ENCODE measurements at regions of chr5 and their contacts with region 1.

Region 1: DNA sequence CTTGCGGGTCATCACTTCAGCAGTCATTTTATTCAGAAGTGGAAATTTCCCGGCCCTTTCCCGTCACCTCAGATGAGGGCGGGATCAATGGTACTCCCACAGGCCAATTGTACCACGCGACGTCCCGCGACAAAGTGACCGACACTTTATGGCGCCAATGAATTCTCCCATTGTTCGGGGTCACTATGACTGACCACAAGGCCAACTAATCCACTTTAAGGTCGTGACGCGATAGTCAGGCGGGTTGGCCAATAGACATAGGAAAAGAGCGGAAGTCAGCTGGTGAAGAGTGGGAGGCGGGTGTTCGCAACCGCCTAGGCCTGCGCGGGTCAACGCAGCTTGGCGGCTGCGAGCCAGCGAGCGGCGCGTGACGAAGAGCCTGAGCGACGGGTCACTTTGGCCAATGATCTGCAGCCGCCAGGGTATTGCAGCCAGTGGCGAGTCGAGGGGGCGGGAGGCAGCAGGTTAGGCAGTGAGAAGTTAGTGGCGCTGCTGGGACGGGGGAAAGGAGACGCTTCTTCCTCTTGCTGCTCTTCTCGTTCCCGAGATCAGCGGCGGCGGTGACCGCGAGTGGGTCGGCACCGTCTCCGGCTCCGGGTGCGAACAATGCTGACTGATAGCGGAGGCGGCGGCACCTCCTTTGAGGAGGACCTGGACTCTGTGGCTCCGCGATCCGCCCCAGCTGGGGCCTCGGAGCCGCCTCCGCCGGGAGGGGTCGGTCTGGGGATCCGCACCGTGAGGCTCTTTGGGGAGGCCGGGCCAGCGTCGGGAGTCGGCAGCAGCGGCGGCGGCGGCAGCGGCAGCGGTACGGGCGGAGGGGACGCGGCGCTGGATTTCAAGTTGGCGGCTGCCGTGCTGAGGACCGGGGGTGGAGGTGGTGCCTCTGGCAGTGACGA is at the start of gene ANKHD1:
- DNase-seq: peak; percentile 91 to 100 (median 95)
- ATAC-seq: peak; percentile 77
- H3K4me3 ChIP-seq: peak within 1 kb of the TSS; percentile 86 to 92
- H3K4me3 Mint-ChIP-seq: no peak within 1 kb of the TSS
- H3K27ac ChIP-seq: peak within 1 kb of the TSS; percentile 89 to 90
- H3K27ac Mint-ChIP-seq: peak within 1 kb of the TSS; percentile 91
- H3K4me1 ChIP-seq: peaks cover 37% of the 10 kb centered on the region
- H3K4me1 Mint-ChIP-seq: peaks cover 36% of the 10 kb centered on the region
- H3K27me3 ChIP-seq: no peaks in the 10 kb centered on the region
- H3K27me3 Mint-ChIP-seq: no peaks in the 10 kb centered on the region
- CTCF ChIP-seq: no peak
- total RNA-seq, gene ANKHD1: 209 to 212 TPM

Region 2: GRCh38 chr5:139222335-139222734 is 1179.3 kb before region 1 on chr5:
- CTCF ChIA-PET with region 1: no interaction called
- POLR2A ChIA-PET with region 1: no interaction called
- intact Hi-C with region 1: no loop called
- DNase-seq: no peak
- ATAC-seq: no peak
- H3K4me3 ChIP-seq: no peak overlapping the region
- H3K4me3 Mint-ChIP-seq: no peak overlapping the region
- H3K27ac ChIP-seq: no peak overlapping the region
- H3K27ac Mint-ChIP-seq: no peak overlapping the region
- H3K4me1 ChIP-seq: no peaks in the 10 kb centered on the region
- H3K4me1 Mint-ChIP-seq: no peaks in the 10 kb centered on the region
- H3K27me3 ChIP-seq: no peaks in the 10 kb centered on the region
- H3K27me3 Mint-ChIP-seq: peaks cover 8% of the 10 kb centered on the region
- CTCF ChIP-seq: no peak

Region 3: GRCh38 chr5:140357726-140358093 is 43.9 kb before region 1 on chr5:
- CTCF ChIA-PET with region 1: no interaction called
- POLR2A ChIA-PET with region 1: no interaction called
- intact Hi-C with region 1: no loop called
- DNase-seq: peak; percentile 55 to 83 (median 67)
- ATAC-seq: peak; percentile 99
- H3K4me3 ChIP-seq: peak overlapping the region in 1 of 2 experiments; percentile 20
- H3K4me3 Mint-ChIP-seq: peak overlapping the region; percentile 64
- H3K27ac ChIP-seq: no peak overlapping the region
- H3K27ac Mint-ChIP-seq: no peak overlapping the region
- H3K4me1 ChIP-seq: peaks cover 9% of the 10 kb centered on the region
- H3K4me1 Mint-ChIP-seq: peaks cover 7% of the 10 kb centered on the region
- H3K27me3 ChIP-seq: no peaks in the 10 kb centered on the region
- H3K27me3 Mint-ChIP-seq: peaks cover 11% of the 10 kb centered on the region
- CTCF ChIP-seq: peak; percentile 77

Region 4: DNA sequence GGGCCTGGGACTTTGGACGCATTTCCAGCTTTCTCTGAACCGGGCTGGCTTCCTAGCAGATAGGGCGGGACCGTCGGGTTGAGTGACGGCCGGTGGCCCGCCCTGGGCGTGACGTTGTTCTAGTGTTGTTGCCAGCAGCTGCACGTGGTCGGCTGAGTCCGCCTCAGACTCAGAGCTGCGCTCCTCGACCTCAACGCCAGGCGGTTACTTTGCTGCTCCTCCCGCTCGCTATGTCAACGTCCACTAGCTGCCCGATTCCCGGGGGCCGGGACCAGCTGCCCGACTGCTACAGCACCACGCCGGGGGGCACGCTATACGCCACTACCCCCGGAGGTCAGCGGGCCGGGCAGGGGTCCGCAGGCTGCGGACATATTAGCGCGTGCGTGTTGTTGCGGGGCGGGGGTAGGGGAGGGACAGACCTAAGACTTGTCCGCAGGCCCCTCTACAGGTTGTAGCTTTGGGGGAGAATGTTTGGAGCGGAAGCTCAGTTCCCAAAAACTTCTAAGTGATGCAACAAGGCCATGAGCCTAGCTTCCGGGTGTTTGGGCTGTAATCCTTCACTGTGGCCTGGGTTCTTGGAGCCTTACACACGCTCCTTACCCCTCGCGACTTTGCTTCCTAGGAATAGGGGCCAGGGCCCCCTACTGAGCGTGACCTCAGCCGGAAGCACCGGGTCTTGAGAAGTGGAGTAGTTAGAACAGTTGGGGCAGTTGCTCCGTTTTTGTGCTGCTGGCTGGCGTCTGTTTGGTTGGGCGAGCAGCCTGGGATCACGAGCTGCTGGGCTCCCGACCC is 146.1 kb after region 1 on chr5 and contains the start of gene EIF4EBP3:
- CTCF ChIA-PET with region 1: no interaction called
- POLR2A ChIA-PET with region 1: interaction called, 23 read pairs
- intact Hi-C with region 1: loop called in 1 of 2 experiments (anchors 2 kb)
- DNase-seq: peak; percentile 74 to 94 (median 88)
- ATAC-seq: peak; percentile 97
- H3K4me3 ChIP-seq: peak within 1 kb of the TSS; percentile 69 to 96
- H3K4me3 Mint-ChIP-seq: peak within 1 kb of the TSS; percentile 90
- H3K27ac ChIP-seq: peak within 1 kb of the TSS; percentile 88 to 96
- H3K27ac Mint-ChIP-seq: peak within 1 kb of the TSS; percentile 98
- H3K4me1 ChIP-seq: peaks cover 21% of the 10 kb centered on the region
- H3K4me1 Mint-ChIP-seq: peaks cover 31% of the 10 kb centered on the region
- H3K27me3 ChIP-seq: no peaks in the 10 kb centered on the region
- H3K27me3 Mint-ChIP-seq: no peaks in the 10 kb centered on the region
- CTCF ChIP-seq: peak; percentile 72
- total RNA-seq, gene EIF4EBP3: 10.6 to 13.7 TPM

Region 5: GRCh38 chr5:140564196-140565023 is 162.8 kb after region 1 on chr5 and contains the starts of genes APBB3 and SLC35A4:
- CTCF ChIA-PET with region 1: no interaction called
- POLR2A ChIA-PET with region 1: interaction called, 7 read pairs
- intact Hi-C with region 1: loop called in 1 of 2 experiments (anchors 1 kb)
- DNase-seq: peak; percentile 92 to 100 (median 95)
- ATAC-seq: peak; percentile 88
- H3K4me3 ChIP-seq: peak within 1 kb of the TSS; percentile 52 to 79
- H3K4me3 Mint-ChIP-seq: peak within 1 kb of the TSS; percentile 88
- H3K27ac ChIP-seq: peak within 1 kb of the TSS; percentile 73 to 92
- H3K27ac Mint-ChIP-seq: peak within 1 kb of the TSS; percentile 94
- H3K4me1 ChIP-seq: peaks cover 30% of the 10 kb centered on the region
- H3K4me1 Mint-ChIP-seq: peaks cover 62% of the 10 kb centered on the region
- H3K27me3 ChIP-seq: no peaks in the 10 kb centered on the region
- H3K27me3 Mint-ChIP-seq: no peaks in the 10 kb centered on the region
- CTCF ChIP-seq: no peak
- total RNA-seq, gene APBB3: 51.0 to 51.7 TPM
- total RNA-seq, gene SLC35A4: 14.8 to 19.4 TPM

Region 6: DNA sequence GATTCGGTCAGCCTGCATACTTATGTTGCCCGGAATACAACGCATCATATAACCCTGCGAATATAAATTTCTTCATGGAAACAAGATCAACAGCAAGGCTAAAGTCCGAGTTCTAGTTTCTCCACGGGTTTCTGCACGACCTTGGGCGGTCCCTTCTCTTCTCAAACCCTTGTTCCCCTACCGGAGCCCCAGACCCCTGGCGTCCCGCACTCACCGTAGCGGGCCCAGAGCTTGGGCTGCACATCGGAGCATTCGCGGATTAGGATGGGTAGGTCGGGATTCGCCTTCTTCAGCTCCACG is 245.4 kb after region 1 on chr5:
- CTCF ChIA-PET with region 1: interaction called, 3 read pairs
- POLR2A ChIA-PET with region 1: interaction called, 24 read pairs
- intact Hi-C with region 1: loop called in 1 of 2 experiments (anchors 1 kb)
- DNase-seq: no peak
- ATAC-seq: no peak
- H3K4me3 ChIP-seq: peak overlapping the region; percentile 78 to 81
- H3K4me3 Mint-ChIP-seq: peak overlapping the region; percentile 99
- H3K27ac ChIP-seq: peak overlapping the region; percentile 96 to 97
- H3K27ac Mint-ChIP-seq: peak overlapping the region; percentile 99
- H3K4me1 ChIP-seq: peaks cover 34% of the 10 kb centered on the region
- H3K4me1 Mint-ChIP-seq: peaks cover 47% of the 10 kb centered on the region
- H3K27me3 ChIP-seq: no peaks in the 10 kb centered on the region
- H3K27me3 Mint-ChIP-seq: no peaks in the 10 kb centered on the region
- CTCF ChIP-seq: no peak

Region 7: GRCh38 chr5:140690941-140691924 is 289.6 kb after region 1 on chr5 and contains the starts of genes HARS1 and HARS2:
- CTCF ChIA-PET with region 1: no interaction called
- POLR2A ChIA-PET with region 1: interaction called, 7 read pairs
- intact Hi-C with region 1: loop called in 1 of 2 experiments (anchors 1 kb)
- DNase-seq: peak; percentile 58 to 92 (median 83)
- ATAC-seq: peak; percentile 88
- H3K4me3 ChIP-seq: peak within 1 kb of the TSS; percentile 84 to 94
- H3K4me3 Mint-ChIP-seq: peak within 1 kb of the TSS; percentile 99
- H3K27ac ChIP-seq: peak within 1 kb of the TSS; percentile 77 to 87
- H3K27ac Mint-ChIP-seq: peak within 1 kb of the TSS; percentile 98
- H3K4me1 ChIP-seq: peaks cover 23% of the 10 kb centered on the region
- H3K4me1 Mint-ChIP-seq: peaks cover 48% of the 10 kb centered on the region
- H3K27me3 ChIP-seq: no peaks in the 10 kb centered on the region
- H3K27me3 Mint-ChIP-seq: no peaks in the 10 kb centered on the region
- CTCF ChIP-seq: no peak
- total RNA-seq, gene HARS1: 67.3 to 70.2 TPM
- total RNA-seq, gene HARS2: 41.3 to 43.2 TPM

Region 8: GRCh38 chr5:140710899-140711552 is 309.4 kb after region 1 on chr5:
- CTCF ChIA-PET with region 1: no interaction called
- POLR2A ChIA-PET with region 1: interaction called, 15 read pairs
- intact Hi-C with region 1: loop called (anchors 1 to 2 kb)
- DNase-seq: peak; percentile 66 to 95 (median 85)
- ATAC-seq: peak; percentile 83
- H3K4me3 ChIP-seq: peak overlapping the region; percentile 58 to 74
- H3K4me3 Mint-ChIP-seq: peak overlapping the region; percentile 99
- H3K27ac ChIP-seq: peak overlapping the region; percentile 72 to 86
- H3K27ac Mint-ChIP-seq: peak overlapping the region; percentile 99
- H3K4me1 ChIP-seq: no peaks in the 10 kb centered on the region
- H3K4me1 Mint-ChIP-seq: peaks cover 16% of the 10 kb centered on the region
- H3K27me3 ChIP-seq: no peaks in the 10 kb centered on the region
- H3K27me3 Mint-ChIP-seq: no peaks in the 10 kb centered on the region
- CTCF ChIP-seq: no peak